GM12878 (cell line): ENCODE measurements at regions of chr11 and their contacts with region 1.

Region 1: GRCh38 chr11:13249996-13250395 is 27.6 kb upstream of the BMAL1 start:
- DNase-seq: no peak
- ATAC-seq: peak; percentile 89
- H3K4me3 ChIP-seq: no peak overlapping the region
- H3K27ac ChIP-seq: no peak overlapping the region
- H3K4me1 ChIP-seq: no peaks in the 10 kb centered on the region
- H3K27me3 ChIP-seq: no peaks in the 10 kb centered on the region; a peak in 2 of 4 replicates
- CTCF ChIP-seq: peak; percentile 43 to 65 (median 49); a peak in 4 of 6 replicates
- EP300 ChIP-seq: no peak
- POLR2A ChIP-seq: no peak
- RAD21 ChIP-seq: peak; percentile 57

Region 2: GRCh38 chr11:12625438-12626071 is 624.4 kb before region 1 on chr11:
- CTCF ChIA-PET with region 1: no interaction called
- POLR2A ChIA-PET with region 1: no interaction called
- RAD21 ChIA-PET with region 1: no interaction called
- SMC1A ChIA-PET with region 1: no interaction called
- in situ Hi-C with region 1: no loop called
- intact Hi-C with region 1: no loop called
- DNase-seq: no peak
- ATAC-seq: no peak
- H3K4me3 ChIP-seq: no peak overlapping the region
- H3K27ac ChIP-seq: no peak overlapping the region
- H3K4me1 ChIP-seq: no peaks in the 10 kb centered on the region
- H3K27me3 ChIP-seq: no peaks in the 10 kb centered on the region
- CTCF ChIP-seq: no peak
- EP300 ChIP-seq: no peak
- POLR2A ChIP-seq: no peak
- RAD21 ChIP-seq: no peak

Region 3: GRCh38 chr11:13073119-13073981 is 176.6 kb before region 1 on chr11:
- CTCF ChIA-PET with region 1: no interaction called
- POLR2A ChIA-PET with region 1: no interaction called
- RAD21 ChIA-PET with region 1: no interaction called
- SMC1A ChIA-PET with region 1: no interaction called
- in situ Hi-C with region 1: no loop called
- intact Hi-C with region 1: no loop called
- DNase-seq: peak; percentile 23
- ATAC-seq: peak; percentile 93
- H3K4me3 ChIP-seq: no peak overlapping the region
- H3K27ac ChIP-seq: no peak overlapping the region
- H3K4me1 ChIP-seq: no peaks in the 10 kb centered on the region
- H3K27me3 ChIP-seq: peaks cover 0 to 2% of the 10 kb centered on the region in 2 experiments; a peak in 2 of 4 replicates
- CTCF ChIP-seq: no peak
- EP300 ChIP-seq: peak; percentile 34 to 56; a peak in 1 of 4 replicates
- POLR2A ChIP-seq: no peak
- RAD21 ChIP-seq: no peak

Region 4: GRCh38 chr11:13238879-13239514 is 11.0 kb before region 1 on chr11:
- CTCF ChIA-PET with region 1: interaction called, 13 read pairs
- POLR2A ChIA-PET with region 1: no interaction called
- RAD21 ChIA-PET with region 1: interaction called, 4 read pairs
- SMC1A ChIA-PET with region 1: interaction called, 5 read pairs
- in situ Hi-C with region 1: no loop called
- intact Hi-C with region 1: no loop called
- DNase-seq: no peak
- ATAC-seq: peak; percentile 93
- H3K4me3 ChIP-seq: no peak overlapping the region
- H3K27ac ChIP-seq: no peak overlapping the region
- H3K4me1 ChIP-seq: no peaks in the 10 kb centered on the region
- H3K27me3 ChIP-seq: peaks cover 0 to 3% of the 10 kb centered on the region in 2 experiments; a peak in 2 of 4 replicates
- CTCF ChIP-seq: peak; percentile 71 to 91 (median 86)
- EP300 ChIP-seq: no peak
- POLR2A ChIP-seq: no peak
- RAD21 ChIP-seq: peak; percentile 63

Region 5: DNA sequence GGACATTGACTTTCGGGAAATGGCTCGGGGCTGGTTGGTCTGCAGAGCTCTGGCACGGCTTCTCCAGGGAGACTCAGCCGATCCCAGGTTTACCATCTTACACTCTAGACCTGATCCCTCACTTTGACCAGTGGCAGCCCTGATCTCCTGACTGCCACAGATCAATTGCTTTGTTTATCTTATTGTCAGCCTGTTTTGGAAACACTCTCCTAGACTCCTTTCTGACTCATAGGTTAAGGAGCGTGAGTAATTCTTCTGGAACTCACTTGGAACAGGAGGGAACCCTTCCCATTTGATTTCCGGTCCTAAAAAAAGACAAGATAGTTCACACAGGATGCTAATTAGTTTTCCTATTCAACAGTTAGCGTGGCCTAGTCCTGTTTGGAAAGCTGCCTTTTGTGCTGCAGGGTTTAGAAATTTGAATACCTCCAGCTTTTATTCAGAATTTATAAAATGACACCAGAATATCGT is 11.6 kb after region 1 on chr11:
- CTCF ChIA-PET with region 1: interaction called, 10 read pairs
- POLR2A ChIA-PET with region 1: no interaction called
- RAD21 ChIA-PET with region 1: interaction called, 3 read pairs
- SMC1A ChIA-PET with region 1: interaction called, 14 read pairs
- in situ Hi-C with region 1: no loop called
- intact Hi-C with region 1: no loop called
- DNase-seq: no peak
- ATAC-seq: no peak
- H3K4me3 ChIP-seq: no peak overlapping the region
- H3K27ac ChIP-seq: no peak overlapping the region
- H3K4me1 ChIP-seq: no peaks in the 10 kb centered on the region
- H3K27me3 ChIP-seq: peaks cover 3 to 5% of the 10 kb centered on the region in 2 experiments; a peak in 2 of 4 replicates
- CTCF ChIP-seq: no peak
- EP300 ChIP-seq: no peak
- POLR2A ChIP-seq: no peak
- RAD21 ChIP-seq: no peak

Region 6: GRCh38 chr11:13269775-13270174 is 19.8 kb after region 1 on chr11:
- CTCF ChIA-PET with region 1: interaction called, 5 read pairs
- POLR2A ChIA-PET with region 1: no interaction called
- RAD21 ChIA-PET with region 1: interaction called, 3 read pairs
- SMC1A ChIA-PET with region 1: interaction called, 10 read pairs
- in situ Hi-C with region 1: no loop called
- intact Hi-C with region 1: no loop called
- DNase-seq: no peak
- ATAC-seq: no peak
- H3K4me3 ChIP-seq: no peak overlapping the region
- H3K27ac ChIP-seq: no peak overlapping the region
- H3K4me1 ChIP-seq: no peaks in the 10 kb centered on the region
- H3K27me3 ChIP-seq: peaks cover 0 to 5% of the 10 kb centered on the region in 2 experiments
- CTCF ChIP-seq: no peak
- EP300 ChIP-seq: no peak
- POLR2A ChIP-seq: no peak
- RAD21 ChIP-seq: no peak

Region 7: DNA sequence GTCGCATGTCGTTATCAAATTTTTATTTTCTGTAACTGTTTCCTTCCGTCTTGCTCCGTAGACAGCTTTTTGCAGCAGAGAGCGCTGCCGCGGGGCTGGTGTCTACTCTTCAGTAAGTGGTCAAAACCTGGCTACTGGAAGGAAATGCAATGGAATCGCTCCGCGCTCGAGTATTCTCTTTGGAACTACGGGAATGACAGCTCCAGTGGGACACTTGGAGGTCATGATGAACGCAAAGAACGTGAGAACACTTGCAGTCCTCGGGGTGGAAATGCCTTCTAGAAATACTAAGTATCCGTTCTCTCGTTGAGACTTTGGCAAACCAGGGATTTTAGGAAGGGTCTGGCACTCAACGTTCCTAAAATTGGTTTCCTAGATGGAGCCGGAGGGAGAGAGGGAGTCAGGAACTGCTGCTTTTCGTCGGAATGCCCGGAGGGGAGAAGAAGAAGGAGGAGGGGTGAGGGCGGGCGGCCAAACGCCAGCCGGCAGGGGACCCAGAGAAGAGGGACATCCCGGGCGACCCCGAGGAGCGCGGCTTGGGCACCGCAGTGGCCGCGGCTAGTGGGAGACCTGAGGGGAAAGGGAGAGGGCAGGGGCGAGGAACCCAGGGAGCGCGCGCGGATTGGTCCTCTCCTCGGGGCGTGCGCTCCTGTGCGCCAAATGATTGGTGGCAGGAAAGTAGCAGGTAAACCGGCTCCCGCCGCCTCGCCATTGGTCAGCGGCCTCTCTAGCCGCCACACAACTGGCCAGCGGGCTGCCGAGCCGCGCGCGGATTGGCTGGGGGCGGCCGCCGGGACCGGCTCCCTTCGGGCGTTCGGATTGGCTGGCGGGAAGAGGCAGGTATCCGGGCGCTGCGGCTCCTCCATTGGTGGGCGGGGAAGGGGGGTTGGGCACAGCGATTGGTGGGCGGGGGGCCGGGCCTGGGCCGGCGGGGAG is 27.1 kb after region 1 on chr11:
- CTCF ChIA-PET with region 1: interaction called, 8 read pairs
- POLR2A ChIA-PET with region 1: interaction called, 3 read pairs
- RAD21 ChIA-PET with region 1: interaction called, 10 read pairs
- SMC1A ChIA-PET with region 1: interaction called, 10 read pairs
- in situ Hi-C with region 1: no loop called
- intact Hi-C with region 1: no loop called
- DNase-seq: peak; percentile 85
- ATAC-seq: peak; percentile 89
- H3K4me3 ChIP-seq: peak overlapping the region; percentile 74
- H3K27ac ChIP-seq: no peak overlapping the region
- H3K4me1 ChIP-seq: peaks cover 2% of the 10 kb centered on the region; the same call in 1 of the 2 replicates
- H3K27me3 ChIP-seq: peaks cover 0 to 6% of the 10 kb centered on the region in 2 experiments; a peak in 1 of 4 replicates
- CTCF ChIP-seq: no peak
- EP300 ChIP-seq: no peak
- POLR2A ChIP-seq: peak; percentile 58; the same call in 1 of the 2 replicates
- RAD21 ChIP-seq: no peak

Region 8: DNA sequence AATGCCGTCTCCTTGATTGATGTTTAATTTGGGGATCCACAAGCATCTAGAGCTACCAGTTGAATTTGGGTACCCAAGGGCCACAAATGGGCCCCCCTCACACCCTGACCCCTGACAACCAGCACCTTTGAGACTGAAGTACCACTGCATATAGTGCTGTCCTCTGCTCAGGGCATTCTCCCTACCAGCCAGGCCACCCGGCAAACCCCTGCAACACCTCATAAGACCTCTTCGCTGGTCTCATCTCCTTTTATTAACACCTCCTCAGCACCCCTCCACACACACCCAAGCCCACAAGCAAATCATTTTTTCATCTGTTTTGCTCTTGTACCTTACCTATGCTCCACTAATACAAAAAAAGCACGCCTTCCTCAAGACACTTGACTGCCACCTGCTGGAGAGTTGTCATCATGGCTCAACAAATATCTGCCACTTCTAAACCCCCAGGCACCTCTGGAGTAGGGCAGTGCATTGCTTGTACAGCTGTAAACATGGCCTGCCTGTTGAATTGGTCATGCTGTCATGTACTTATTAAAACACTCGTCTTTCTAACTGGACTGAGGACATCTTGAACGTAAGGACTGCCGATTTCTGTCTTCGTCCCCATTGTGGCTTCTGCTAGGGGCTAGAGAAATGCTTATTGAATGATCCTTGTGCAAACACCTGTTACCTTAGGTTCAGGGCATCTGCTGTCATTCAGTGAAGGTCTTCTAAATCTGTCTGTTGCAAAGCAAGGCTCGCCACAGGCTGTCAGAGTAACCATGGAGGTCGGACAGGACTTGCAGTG is 94.1 kb after region 1 on chr11:
- CTCF ChIA-PET with region 1: interaction called, 253 read pairs
- POLR2A ChIA-PET with region 1: interaction called, 3 read pairs
- RAD21 ChIA-PET with region 1: interaction called, 171 read pairs
- SMC1A ChIA-PET with region 1: interaction called, 132 read pairs
- in situ Hi-C with region 1: loop called (anchors 5 kb)
- intact Hi-C with region 1: loop called (anchors 1 kb)
- DNase-seq: no peak
- ATAC-seq: peak; percentile 69
- H3K4me3 ChIP-seq: no peak overlapping the region
- H3K27ac ChIP-seq: no peak overlapping the region
- H3K4me1 ChIP-seq: peaks cover 40% of the 10 kb centered on the region
- H3K27me3 ChIP-seq: no peaks in the 10 kb centered on the region
- CTCF ChIP-seq: peak; percentile 79 to 84 (median 80)
- EP300 ChIP-seq: no peak
- POLR2A ChIP-seq: no peak
- RAD21 ChIP-seq: peak; percentile 84

Region 9: DNA sequence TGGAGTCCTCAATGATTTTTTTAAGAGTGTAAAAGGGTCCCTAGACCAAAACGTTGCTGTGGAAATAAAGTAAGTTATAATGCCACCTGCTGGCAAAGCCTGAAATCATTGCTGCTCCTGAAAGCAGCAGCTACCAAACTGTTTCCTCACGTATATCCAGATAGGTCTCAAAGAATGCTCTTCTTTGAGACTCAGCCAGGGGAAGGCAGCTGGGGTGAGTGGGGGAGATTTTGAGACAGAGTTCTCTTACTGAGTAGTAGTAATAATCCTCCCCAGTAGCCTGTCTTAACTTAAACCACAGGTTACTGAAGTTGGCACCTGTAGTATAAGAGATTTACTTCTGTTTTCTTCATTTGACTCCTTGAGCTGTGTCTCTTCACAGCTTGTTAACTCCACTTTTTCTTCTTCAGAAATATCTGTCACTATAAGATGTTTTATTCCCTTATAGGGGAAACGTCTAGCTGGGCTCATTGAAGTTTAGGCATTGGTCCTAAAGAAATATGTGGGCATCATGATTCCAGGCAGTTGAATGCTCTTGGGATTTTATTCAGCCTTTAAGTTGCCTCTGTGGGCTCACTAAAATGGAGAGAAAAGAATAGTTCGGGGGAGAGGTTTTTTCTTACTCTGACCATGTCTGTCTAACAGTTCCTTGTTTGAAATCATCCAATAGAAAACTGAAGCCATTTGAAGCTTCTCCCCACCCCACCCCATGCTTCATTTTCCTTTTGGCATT is 135.1 kb after region 1 on chr11:
- CTCF ChIA-PET with region 1: interaction called, 62 read pairs
- POLR2A ChIA-PET with region 1: no interaction called
- RAD21 ChIA-PET with region 1: interaction called, 15 read pairs
- SMC1A ChIA-PET with region 1: interaction called, 13 read pairs
- in situ Hi-C with region 1: no loop called
- intact Hi-C with region 1: no loop called
- DNase-seq: peak; percentile 3
- ATAC-seq: peak; percentile 74
- H3K4me3 ChIP-seq: no peak overlapping the region
- H3K27ac ChIP-seq: no peak overlapping the region
- H3K4me1 ChIP-seq: no peaks in the 10 kb centered on the region
- H3K27me3 ChIP-seq: no peaks in the 10 kb centered on the region
- CTCF ChIP-seq: peak; percentile 58 to 69 (median 58)
- EP300 ChIP-seq: no peak
- POLR2A ChIP-seq: no peak
- RAD21 ChIP-seq: peak; percentile 58